Caco-2 (cell line): ENCODE measurements at regions of chr7 and their contacts with region 1.

Region 1: DNA sequence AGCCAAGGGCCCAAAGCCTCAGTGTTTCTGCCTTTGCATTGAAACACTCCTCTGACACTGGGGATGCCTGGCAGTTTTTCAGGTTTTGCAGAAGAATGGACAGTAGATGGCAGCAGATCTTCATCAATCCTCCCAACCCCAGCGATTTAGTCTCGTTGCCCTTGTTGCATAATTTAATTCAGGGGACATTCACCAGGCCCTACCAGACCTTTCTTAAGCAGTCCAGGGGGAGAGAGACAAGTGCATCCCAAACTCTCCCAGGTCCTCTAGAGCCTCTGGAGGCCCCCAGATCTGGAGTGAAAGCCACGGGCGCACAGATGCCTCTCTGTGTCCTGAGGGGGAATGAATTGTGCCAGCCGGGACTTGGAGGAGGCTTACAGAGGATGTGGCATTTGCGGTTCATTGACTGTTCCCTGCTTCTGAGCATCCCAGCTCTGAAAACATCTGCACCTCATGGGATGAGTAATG is 29.6 kb downstream of the MINDY4 start:
- DNase-seq: peak; percentile 57 to 75
- H3K4me3 ChIP-seq: no peak overlapping the region
- H3K4me3 Mint-ChIP-seq: no peak overlapping the region
- H3K27ac Mint-ChIP-seq: no peak overlapping the region
- H3K4me1 ChIP-seq: peaks cover 33% of the 10 kb centered on the region
- H3K4me1 Mint-ChIP-seq: peaks cover 20% of the 10 kb centered on the region
- H3K27me3 ChIP-seq: no peaks in the 10 kb centered on the region
- H3K27me3 Mint-ChIP-seq: no peaks in the 10 kb centered on the region
- CTCF ChIP-seq: peak; percentile 61 to 74

Region 2: GRCh38 chr7:30727061-30727945 is 73.5 kb before region 1 on chr7:
- CTCF ChIA-PET with region 1: no interaction called
- POLR2A ChIA-PET with region 1: no interaction called
- intact Hi-C with region 1: no loop called
- DNase-seq: peak in 1 of 2 experiments; percentile 26
- H3K4me3 ChIP-seq: no peak overlapping the region
- H3K4me3 Mint-ChIP-seq: no peak overlapping the region
- H3K27ac Mint-ChIP-seq: peak overlapping the region; percentile 55
- H3K4me1 ChIP-seq: peaks cover 19% of the 10 kb centered on the region
- H3K4me1 Mint-ChIP-seq: peaks cover 23% of the 10 kb centered on the region
- H3K27me3 ChIP-seq: no peaks in the 10 kb centered on the region
- H3K27me3 Mint-ChIP-seq: no peaks in the 10 kb centered on the region
- CTCF ChIP-seq: no peak

Region 3: DNA sequence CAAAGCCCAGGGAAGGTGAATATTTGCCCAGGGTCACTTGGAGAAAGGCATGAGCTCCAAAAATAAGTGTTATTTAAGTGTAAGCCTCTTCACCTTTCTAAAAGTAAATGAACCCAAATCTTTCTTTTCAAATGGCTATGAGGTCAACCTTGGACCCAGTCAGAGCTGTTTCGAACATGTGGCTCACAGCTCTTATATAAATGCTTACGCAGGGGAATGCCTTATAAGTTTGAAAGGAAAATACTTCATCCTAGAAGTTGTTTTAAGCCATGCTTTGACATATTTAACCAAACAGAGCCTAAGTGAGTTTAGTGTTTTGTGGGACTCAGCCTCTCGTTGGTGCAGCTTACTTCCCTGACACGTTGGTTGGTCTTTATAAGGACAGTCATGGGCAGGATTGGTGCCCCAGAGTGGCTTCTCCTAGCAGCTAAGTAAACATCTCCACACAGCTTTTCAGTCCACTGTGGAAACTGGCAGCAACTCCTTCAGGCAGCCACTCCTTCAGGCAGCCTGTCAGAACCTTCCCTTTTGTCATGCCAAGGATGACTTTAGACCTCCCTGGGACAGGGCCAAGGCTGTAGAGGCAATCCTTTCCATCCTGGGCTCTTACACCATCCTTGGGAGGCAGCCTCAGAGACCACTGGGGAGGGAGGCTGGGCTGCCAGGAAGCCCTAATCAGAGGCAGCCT is 14.0 kb after region 1 on chr7:
- CTCF ChIA-PET with region 1: no interaction called
- POLR2A ChIA-PET with region 1: no interaction called
- intact Hi-C with region 1: no loop called
- DNase-seq: no peak
- H3K4me3 ChIP-seq: no peak overlapping the region
- H3K4me3 Mint-ChIP-seq: no peak overlapping the region
- H3K27ac Mint-ChIP-seq: no peak overlapping the region
- H3K4me1 ChIP-seq: no peaks in the 10 kb centered on the region
- H3K4me1 Mint-ChIP-seq: no peaks in the 10 kb centered on the region
- H3K27me3 ChIP-seq: no peaks in the 10 kb centered on the region
- H3K27me3 Mint-ChIP-seq: no peaks in the 10 kb centered on the region
- CTCF ChIP-seq: no peak

Region 4: DNA sequence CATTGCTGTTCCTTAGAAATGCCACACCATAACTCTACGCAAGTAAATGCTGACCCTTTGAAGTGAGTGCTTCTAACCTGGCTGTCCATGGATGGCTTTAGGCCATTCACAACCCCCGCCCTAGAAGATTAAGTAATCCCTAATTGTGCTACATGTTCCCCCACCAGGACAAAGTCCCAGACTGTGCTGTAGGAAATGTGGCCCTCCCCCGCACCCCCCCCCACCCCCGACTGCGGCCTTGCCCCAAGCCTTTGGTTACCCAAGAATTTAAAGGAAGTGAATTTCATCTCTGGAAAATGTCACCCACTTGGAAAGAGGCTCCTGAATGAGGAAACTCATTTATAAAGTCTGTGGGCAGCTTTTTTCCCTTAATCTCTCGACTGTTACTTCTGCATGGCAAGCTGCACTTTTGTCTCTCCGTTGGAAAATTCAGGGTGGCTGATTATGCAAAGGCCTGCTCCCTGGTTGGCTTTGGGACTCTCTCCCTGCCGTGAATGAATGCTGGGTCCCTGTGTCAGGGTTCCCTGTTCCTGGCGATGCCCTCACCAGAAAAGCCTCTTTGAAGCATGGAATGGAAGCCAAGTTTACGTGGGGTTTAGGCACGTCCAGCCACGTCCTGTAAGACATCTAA is 79.4 kb after region 1 on chr7:
- CTCF ChIA-PET with region 1: no interaction called
- POLR2A ChIA-PET with region 1: no interaction called
- intact Hi-C with region 1: loop called (anchors 5 kb)
- DNase-seq: peak in 1 of 2 experiments; percentile 32
- H3K4me3 ChIP-seq: no peak overlapping the region
- H3K4me3 Mint-ChIP-seq: peak overlapping the region; percentile 40
- H3K27ac Mint-ChIP-seq: peak overlapping the region; percentile 85
- H3K4me1 ChIP-seq: peaks cover 34% of the 10 kb centered on the region
- H3K4me1 Mint-ChIP-seq: peaks cover 31% of the 10 kb centered on the region
- H3K27me3 ChIP-seq: no peaks in the 10 kb centered on the region
- H3K27me3 Mint-ChIP-seq: no peaks in the 10 kb centered on the region
- CTCF ChIP-seq: no peak

Region 5: GRCh38 chr7:30896783-30897637 is 96.2 kb after region 1 on chr7:
- CTCF ChIA-PET with region 1: no interaction called
- POLR2A ChIA-PET with region 1: no interaction called
- intact Hi-C with region 1: loop called (anchors 2 kb)
- DNase-seq: peak; percentile 32 to 71
- H3K4me3 ChIP-seq: no peak overlapping the region
- H3K4me3 Mint-ChIP-seq: peak overlapping the region; percentile 27
- H3K27ac Mint-ChIP-seq: peak overlapping the region; percentile 86
- H3K4me1 ChIP-seq: peaks cover 30% of the 10 kb centered on the region
- H3K4me1 Mint-ChIP-seq: peaks cover 35% of the 10 kb centered on the region
- H3K27me3 ChIP-seq: no peaks in the 10 kb centered on the region
- H3K27me3 Mint-ChIP-seq: no peaks in the 10 kb centered on the region
- CTCF ChIP-seq: no peak

Region 6: DNA sequence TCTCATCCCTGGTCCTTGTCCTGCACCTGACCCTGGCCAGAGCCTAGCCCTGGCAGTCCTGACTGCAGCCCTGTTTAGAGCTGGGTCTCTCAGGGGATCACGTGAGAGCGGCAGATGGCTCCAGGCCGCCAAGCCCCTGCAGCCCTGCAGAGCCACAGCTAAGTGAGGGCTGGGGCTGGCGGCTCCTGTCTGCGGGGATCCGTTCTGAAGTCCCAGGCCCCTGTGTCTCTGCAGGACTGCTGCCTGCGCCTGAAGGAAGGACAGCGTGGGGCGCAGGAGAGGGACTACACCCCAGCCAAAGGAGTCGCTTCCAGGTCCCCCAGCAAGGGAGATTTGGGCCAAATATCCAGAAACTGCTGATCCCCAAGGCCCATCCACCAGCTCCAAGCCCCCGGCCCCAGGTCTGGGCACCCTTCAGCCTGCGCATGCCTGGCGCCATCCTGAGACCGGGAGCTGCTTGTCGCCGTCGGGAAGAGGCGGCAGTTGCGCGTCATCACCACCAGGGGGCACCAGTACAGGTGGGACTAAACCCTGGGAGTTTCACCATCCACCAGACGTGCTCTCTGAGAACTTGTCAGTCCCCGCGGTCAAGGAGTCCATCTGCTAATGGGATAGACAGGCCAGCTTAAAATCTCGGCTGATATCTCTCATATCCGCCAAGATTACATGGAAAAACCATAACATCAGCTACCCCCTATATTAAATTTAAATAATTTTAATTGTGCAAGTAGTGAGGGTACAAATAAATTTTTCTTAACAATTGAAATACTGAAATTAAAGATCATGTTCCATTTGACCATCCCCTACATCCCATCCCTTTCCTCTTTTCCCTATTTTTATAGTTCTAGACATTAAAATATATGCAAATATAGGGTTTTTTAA is 137.9 kb after region 1 on chr7:
- CTCF ChIA-PET with region 1: no interaction called
- POLR2A ChIA-PET with region 1: no interaction called
- intact Hi-C with region 1: loop called (anchors 1 kb)
- DNase-seq: peak; percentile 86 to 90
- H3K4me3 ChIP-seq: no peak overlapping the region
- H3K4me3 Mint-ChIP-seq: no peak overlapping the region
- H3K27ac Mint-ChIP-seq: no peak overlapping the region
- H3K4me1 ChIP-seq: peaks cover 9% of the 10 kb centered on the region
- H3K4me1 Mint-ChIP-seq: peaks cover 17% of the 10 kb centered on the region
- H3K27me3 ChIP-seq: no peaks in the 10 kb centered on the region
- H3K27me3 Mint-ChIP-seq: no peaks in the 10 kb centered on the region
- CTCF ChIP-seq: peak; percentile 93 to 95

Region 7: GRCh38 chr7:30974605-30975255 is 173.9 kb after region 1 on chr7:
- CTCF ChIA-PET with region 1: interaction called, 7 read pairs
- POLR2A ChIA-PET with region 1: no interaction called
- intact Hi-C with region 1: loop called (anchors 1 kb)
- DNase-seq: peak; percentile 63 to 72
- H3K4me3 ChIP-seq: no peak overlapping the region
- H3K4me3 Mint-ChIP-seq: no peak overlapping the region
- H3K27ac Mint-ChIP-seq: no peak overlapping the region
- H3K4me1 ChIP-seq: no peaks in the 10 kb centered on the region
- H3K4me1 Mint-ChIP-seq: no peaks in the 10 kb centered on the region
- H3K27me3 ChIP-seq: no peaks in the 10 kb centered on the region
- H3K27me3 Mint-ChIP-seq: peaks cover 7% of the 10 kb centered on the region
- CTCF ChIP-seq: peak; percentile 74 to 82